CD14-positive monocyte (primary cell): ENCODE measurements at regions of chr13 and their contacts with region 1.

Region 1: DNA sequence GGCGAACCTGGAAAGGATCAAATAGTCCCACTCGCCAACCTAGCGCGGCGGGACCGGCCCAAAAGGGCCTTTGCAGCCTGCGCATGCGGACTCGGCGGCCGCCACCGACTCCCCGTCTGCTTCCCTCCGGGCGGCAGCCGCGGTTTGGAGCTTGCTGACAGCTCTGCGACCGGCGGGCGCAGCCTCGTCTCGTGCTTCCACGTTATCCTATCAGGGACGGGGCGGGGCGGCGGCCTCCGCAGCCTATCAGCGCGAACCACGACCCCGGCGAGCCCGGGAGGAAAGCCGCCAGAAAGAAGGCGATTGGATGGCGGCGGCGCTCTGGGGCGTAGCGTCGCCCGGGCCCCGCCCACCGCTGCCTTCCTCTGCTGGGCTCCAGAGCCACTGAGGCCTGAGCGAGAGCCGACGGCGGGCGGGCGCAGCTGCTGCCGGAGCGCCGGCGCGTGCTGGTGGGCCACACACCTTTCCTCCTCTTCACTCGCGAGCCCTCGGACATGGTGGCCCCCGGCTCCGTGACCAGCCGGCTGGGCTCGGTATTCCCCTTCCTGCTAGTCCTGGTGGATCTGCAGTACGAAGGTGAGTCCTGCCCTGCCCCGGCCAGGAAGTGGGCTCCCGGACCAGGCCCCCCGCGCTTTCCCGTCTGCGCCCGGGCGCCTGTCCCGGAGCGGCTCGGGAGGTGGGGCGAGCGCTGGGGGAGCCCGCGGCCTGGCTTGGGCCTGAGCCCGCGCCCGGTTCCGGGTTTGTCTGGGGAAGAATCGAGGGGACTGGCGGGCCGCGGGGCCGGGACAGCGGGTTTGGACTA is at the start of gene DNAJC3:
- DNase-seq: peak; percentile 97 to 99 (median 98)
- H3K4me3 ChIP-seq: peak within 1 kb of the TSS; percentile 83 to 96 (median 95)
- H3K4me3 Mint-ChIP-seq: peak within 1 kb of the TSS; percentile 96 to 98
- H3K27ac ChIP-seq: peak within 1 kb of the TSS; percentile 94 to 96
- H3K27ac Mint-ChIP-seq: peak within 1 kb of the TSS; percentile 92 to 100 (median 98)
- H3K4me1 ChIP-seq: peaks cover 41 to 51% of the 10 kb centered on the region in 2 donors
- H3K4me1 Mint-ChIP-seq: peaks cover 62% of the 10 kb centered on the region
- H3K27me3 ChIP-seq: no peaks in the 10 kb centered on the region
- H3K27me3 Mint-ChIP-seq: no peaks in the 10 kb centered on the region
- CTCF ChIP-seq: no peak
- polyA plus RNA-seq, gene DNAJC3: 11.1 to 27.6 (median 22.3) TPM

Region 2: GRCh38 chr13:95509521-95510310 is 167.2 kb before region 1 on chr13:
- intact Hi-C with region 1: loop called in 1 of 2 experiments (anchors 10 kb)
- DNase-seq: peak; percentile 61 to 86 (median 82)
- H3K4me3 ChIP-seq: peak overlapping the region in 2 of 3 experiments; percentile 16 to 46
- H3K4me3 Mint-ChIP-seq: no peak overlapping the region
- H3K27ac ChIP-seq: peak overlapping the region in 1 of 2 donors; percentile 54
- H3K27ac Mint-ChIP-seq: no peak overlapping the region
- H3K4me1 ChIP-seq: peaks cover 21% of the 10 kb centered on the region in 2 donors
- H3K4me1 Mint-ChIP-seq: peaks cover 7% of the 10 kb centered on the region
- H3K27me3 ChIP-seq: no peaks in the 10 kb centered on the region
- H3K27me3 Mint-ChIP-seq: no peaks in the 10 kb centered on the region
- CTCF ChIP-seq: no peak

Region 3: GRCh38 chr13:95603887-95604533 is 73.0 kb before region 1 on chr13:
- intact Hi-C with region 1: no loop called
- DNase-seq: peak; percentile 5 to 32 (median 16)
- H3K4me3 ChIP-seq: no peak overlapping the region
- H3K4me3 Mint-ChIP-seq: no peak overlapping the region
- H3K27ac ChIP-seq: no peak overlapping the region
- H3K27ac Mint-ChIP-seq: peak overlapping the region in 2 of 7 donors; percentile 1 to 8
- H3K4me1 ChIP-seq: peaks cover 4 to 7% of the 10 kb centered on the region in 2 donors
- H3K4me1 Mint-ChIP-seq: peaks cover 2% of the 10 kb centered on the region
- H3K27me3 ChIP-seq: no peaks in the 10 kb centered on the region
- H3K27me3 Mint-ChIP-seq: peaks cover 1 to 4% (median 2%) of the 10 kb centered on the region in 3 donors
- CTCF ChIP-seq: no peak

Region 4: GRCh38 chr13:95714142-95714829 is 37.3 kb after region 1 on chr13:
- intact Hi-C with region 1: loop called in 1 of 2 experiments (anchors 5 kb)
- DNase-seq: peak; percentile 79 to 94 (median 91)
- H3K4me3 ChIP-seq: peak overlapping the region in 1 of 3 experiments; percentile 9
- H3K4me3 Mint-ChIP-seq: peak overlapping the region in 1 of 2 donors; percentile 21
- H3K27ac ChIP-seq: peak overlapping the region; percentile 73 to 87
- H3K27ac Mint-ChIP-seq: peak overlapping the region; percentile 88 to 96 (median 92)
- H3K4me1 ChIP-seq: peaks cover 31 to 54% of the 10 kb centered on the region in 2 donors
- H3K4me1 Mint-ChIP-seq: peaks cover 40% of the 10 kb centered on the region
- H3K27me3 ChIP-seq: no peaks in the 10 kb centered on the region
- H3K27me3 Mint-ChIP-seq: no peaks in the 10 kb centered on the region
- CTCF ChIP-seq: no peak